T-cell (primary cell): ENCODE measurements at regions of chr12 and their contacts with region 1.

Region 1: DNA sequence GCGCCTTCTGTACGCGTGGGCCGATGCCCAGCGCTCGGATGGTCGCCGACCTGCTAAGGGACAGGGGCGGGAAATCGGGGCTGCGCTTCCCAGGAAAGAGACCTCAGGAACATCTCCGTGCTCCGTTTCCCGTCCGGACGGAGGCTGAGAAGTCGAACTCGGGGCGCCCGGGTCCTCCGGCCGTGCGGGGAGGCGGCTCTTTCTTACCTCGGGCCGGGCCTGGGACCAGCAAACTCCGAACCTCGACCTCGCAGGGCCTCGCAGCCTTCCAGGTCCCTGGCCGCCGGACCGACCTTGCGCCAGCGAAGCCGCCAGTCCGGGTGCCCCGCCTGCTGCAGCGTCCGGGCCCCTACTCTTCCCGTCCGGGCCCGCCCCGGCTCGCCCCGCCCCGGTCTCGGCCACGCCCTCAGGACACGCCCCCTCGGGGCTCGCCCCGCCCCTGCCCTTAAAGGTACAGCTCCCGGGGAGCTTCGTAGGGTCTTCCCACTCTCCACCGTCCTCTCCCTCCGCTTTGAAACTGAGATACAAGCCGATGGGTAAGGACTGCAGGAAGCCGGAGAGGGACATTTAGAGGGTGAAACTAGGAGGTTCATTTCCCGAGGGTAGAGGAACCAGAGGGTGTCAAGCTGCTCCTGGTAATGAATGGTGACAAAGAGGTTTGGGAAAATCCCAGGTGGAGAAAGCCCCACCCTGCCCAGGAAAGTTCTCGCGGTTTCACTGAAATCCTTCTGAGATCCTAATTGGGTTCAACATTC is at the start of gene SLC8B1:
- DNase-seq: peak; percentile 53 to 94 (median 78)
- ATAC-seq: peak; percentile 96 to 99 (median 98)
- H3K4me3 ChIP-seq: peak within 1 kb of the TSS; percentile 92 to 93
- H3K4me3 Mint-ChIP-seq: peak within 1 kb of the TSS; percentile 91 to 97 (median 96)
- H3K27ac ChIP-seq: peak within 1 kb of the TSS; percentile 52
- H3K27ac Mint-ChIP-seq: peak within 1 kb of the TSS; percentile 77 to 89
- H3K4me1 ChIP-seq: peaks cover 8 to 30% of the 10 kb centered on the region in 2 experiments
- H3K4me1 Mint-ChIP-seq: peaks cover 41 to 44% (median 43%) of the 10 kb centered on the region in 3 donors
- H3K27me3 ChIP-seq: peaks cover 0 to 10% of the 10 kb centered on the region in 2 experiments
- H3K27me3 Mint-ChIP-seq: peaks cover 0 to 4% of the 10 kb centered on the region in 2 donors
- total RNA-seq, gene SLC8B1: 76.7 to 120 (median 102) TPM

Region 2: DNA sequence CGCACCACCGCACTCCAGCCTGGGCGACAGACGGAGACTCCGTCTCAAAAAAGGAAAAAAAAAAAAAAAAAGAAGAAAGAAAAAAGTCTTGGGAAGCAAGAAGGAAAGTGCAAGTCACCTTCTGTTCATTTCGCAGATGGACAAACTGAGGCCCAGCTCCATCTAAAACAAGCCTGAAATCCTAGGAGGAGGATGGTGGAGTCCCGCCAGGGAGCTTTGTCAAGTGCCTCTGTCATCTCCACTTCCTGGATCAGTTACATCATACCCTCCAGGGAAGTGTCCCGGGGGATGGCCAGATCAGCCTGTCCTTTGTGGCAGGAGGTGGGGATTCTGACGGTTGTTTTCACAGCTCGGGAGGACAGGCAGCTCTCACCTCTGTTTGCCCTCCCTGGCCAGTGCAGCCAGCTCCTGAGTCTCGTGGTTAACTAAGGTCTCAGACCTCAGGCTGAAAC is 78.6 kb after region 1 on chr12:
- CTCF ChIA-PET with region 1: interaction called in 1 of 2 experiments, 11 read pairs
- POLR2A ChIA-PET with region 1: no interaction called
- DNase-seq: no peak
- ATAC-seq: no peak
- H3K4me3 ChIP-seq: no peak overlapping the region
- H3K4me3 Mint-ChIP-seq: no peak overlapping the region
- H3K27ac ChIP-seq: no peak overlapping the region
- H3K27ac Mint-ChIP-seq: no peak overlapping the region
- H3K4me1 ChIP-seq: no peaks in the 10 kb centered on the region
- H3K4me1 Mint-ChIP-seq: no peaks in the 10 kb centered on the region
- H3K27me3 ChIP-seq: peaks cover 0 to 41% of the 10 kb centered on the region in 2 experiments
- H3K27me3 Mint-ChIP-seq: peaks cover 10 to 18% of the 10 kb centered on the region in 2 donors